SK-N-SH (cell line): ENCODE measurements at regions of chr17 and their contacts with region 1.

Region 1: DNA sequence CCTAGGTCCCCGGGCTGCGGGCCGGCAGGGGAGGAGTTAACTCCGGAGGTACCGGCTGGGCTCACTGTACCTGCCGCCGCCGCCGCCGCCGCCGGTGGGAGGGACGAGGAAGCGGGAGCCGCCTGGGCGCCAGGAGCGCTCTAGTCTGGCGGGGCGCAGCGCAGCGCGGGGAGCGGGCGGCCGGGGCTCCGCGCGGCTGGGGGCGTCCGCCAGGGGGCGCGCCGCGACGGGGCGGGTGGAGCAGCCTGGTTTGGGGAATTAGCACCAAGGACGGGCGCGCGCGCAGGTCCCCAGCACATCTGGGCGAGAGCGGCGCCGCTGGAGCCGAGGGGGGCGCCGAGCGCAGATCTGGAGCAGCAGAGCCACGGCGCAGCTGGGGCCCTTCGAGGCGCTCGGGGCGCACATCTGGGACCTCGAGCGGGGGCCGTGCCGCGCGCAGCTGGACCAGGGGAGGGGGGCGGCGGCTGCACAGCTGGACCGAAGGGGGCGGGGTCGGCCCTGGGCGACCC is at the start of gene NXPH3:
- DNase-seq: peak; percentile 91
- H3K4me3 ChIP-seq: peak within 1 kb of the TSS; percentile 67 to 83
- H3K27ac ChIP-seq: no peak within 1 kb of the TSS
- H3K4me1 ChIP-seq: peaks cover 3 to 15% of the 10 kb centered on the region in 2 experiments; a peak in 2 of 4 replicates
- H3K27me3 ChIP-seq: peaks cover 15% of the 10 kb centered on the region; the same call in 1 of the 2 replicates
- CTCF ChIP-seq: peak; percentile 47
- EP300 ChIP-seq: no peak
- RAD21 ChIP-seq: peak; percentile 28; the same call in 1 of the 2 replicates
- polyA plus RNA-seq, gene NXPH3: 0.30 and 0.31 TPM in 2 replicates

Region 2: DNA sequence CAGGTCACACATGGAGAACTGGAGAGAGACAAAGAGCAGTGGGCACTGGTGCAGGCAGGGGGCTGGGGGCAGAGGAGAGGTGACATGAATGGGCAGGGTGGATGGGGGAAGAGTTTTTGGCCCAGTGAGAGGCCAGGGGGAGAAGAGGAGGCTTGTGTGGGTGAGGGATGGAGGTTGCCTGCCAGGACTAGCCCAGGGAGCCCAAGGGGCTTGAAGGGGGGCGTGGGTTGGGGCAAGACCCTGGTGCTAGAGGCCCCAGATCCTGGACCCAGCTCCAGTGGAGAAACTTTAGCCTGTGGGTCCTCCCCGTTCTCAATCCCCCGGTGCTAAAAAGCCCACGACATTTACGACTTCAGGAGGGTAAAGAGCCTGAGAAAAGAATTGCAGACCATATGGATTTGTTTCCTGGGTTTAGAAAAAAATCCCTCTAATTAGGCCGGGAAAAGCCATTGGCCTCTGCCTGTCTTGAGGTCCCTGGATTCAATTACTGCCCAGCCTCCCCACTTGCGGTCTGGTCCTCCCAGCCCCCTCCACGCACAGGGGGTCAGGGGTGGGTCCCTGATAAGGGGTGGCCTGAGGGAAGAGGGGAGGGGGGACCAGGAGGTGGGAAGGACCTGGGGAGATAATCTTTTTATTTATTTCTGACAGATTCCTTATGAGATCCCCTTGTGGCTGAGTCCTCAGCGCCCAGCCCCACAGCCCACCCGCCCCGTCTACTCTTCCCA is 47.5 kb before region 1 on chr17:
- CTCF ChIA-PET with region 1: no interaction called
- POLR2A ChIA-PET with region 1: no interaction called
- DNase-seq: peak; percentile 82
- H3K4me3 ChIP-seq: no peak overlapping the region
- H3K27ac ChIP-seq: peak overlapping the region in 1 of 2 experiments; percentile 51; a peak in 1 of 4 replicates
- H3K4me1 ChIP-seq: peaks cover 0 to 41% of the 10 kb centered on the region in 2 experiments; a peak in 1 of 4 replicates
- H3K27me3 ChIP-seq: peaks cover 14% of the 10 kb centered on the region; the same call in 1 of the 2 replicates
- CTCF ChIP-seq: no peak
- EP300 ChIP-seq: peak in 1 of 2 experiments; percentile 70; a peak in 1 of 4 replicates
- RAD21 ChIP-seq: peak; percentile 3; the same call in 1 of the 2 replicates

Region 3: GRCh38 chr17:49597928-49598655 is 22.5 kb after region 1 on chr17:
- CTCF ChIA-PET with region 1: interaction called, 22 read pairs
- POLR2A ChIA-PET with region 1: no interaction called
- DNase-seq: no peak
- H3K4me3 ChIP-seq: no peak overlapping the region
- H3K27ac ChIP-seq: no peak overlapping the region
- H3K4me1 ChIP-seq: no peaks in the 10 kb centered on the region; a peak in 1 of 4 replicates
- H3K27me3 ChIP-seq: no peaks in the 10 kb centered on the region
- CTCF ChIP-seq: no peak
- EP300 ChIP-seq: no peak
- RAD21 ChIP-seq: no peak

Region 4: GRCh38 chr17:50101346-50102163 is 525.9 kb after region 1 on chr17:
- CTCF ChIA-PET with region 1: no interaction called
- POLR2A ChIA-PET with region 1: no interaction called
- DNase-seq: peak; percentile 89
- H3K4me3 ChIP-seq: no peak overlapping the region
- H3K27ac ChIP-seq: peak overlapping the region in 1 of 2 experiments; percentile 58; a peak in 2 of 4 replicates
- H3K4me1 ChIP-seq: peaks cover 0 to 28% of the 10 kb centered on the region in 2 experiments; a peak in 1 of 4 replicates
- H3K27me3 ChIP-seq: no peaks in the 10 kb centered on the region
- CTCF ChIP-seq: no peak
- EP300 ChIP-seq: 0 out of 4 replicates have a peak, but pooled peaks of 1 of the 2 experiments have one; percentile 4
- RAD21 ChIP-seq: no peak